ENCODE measurements at regions of chr2 and their contacts with region 1.

Region 1: DNA sequence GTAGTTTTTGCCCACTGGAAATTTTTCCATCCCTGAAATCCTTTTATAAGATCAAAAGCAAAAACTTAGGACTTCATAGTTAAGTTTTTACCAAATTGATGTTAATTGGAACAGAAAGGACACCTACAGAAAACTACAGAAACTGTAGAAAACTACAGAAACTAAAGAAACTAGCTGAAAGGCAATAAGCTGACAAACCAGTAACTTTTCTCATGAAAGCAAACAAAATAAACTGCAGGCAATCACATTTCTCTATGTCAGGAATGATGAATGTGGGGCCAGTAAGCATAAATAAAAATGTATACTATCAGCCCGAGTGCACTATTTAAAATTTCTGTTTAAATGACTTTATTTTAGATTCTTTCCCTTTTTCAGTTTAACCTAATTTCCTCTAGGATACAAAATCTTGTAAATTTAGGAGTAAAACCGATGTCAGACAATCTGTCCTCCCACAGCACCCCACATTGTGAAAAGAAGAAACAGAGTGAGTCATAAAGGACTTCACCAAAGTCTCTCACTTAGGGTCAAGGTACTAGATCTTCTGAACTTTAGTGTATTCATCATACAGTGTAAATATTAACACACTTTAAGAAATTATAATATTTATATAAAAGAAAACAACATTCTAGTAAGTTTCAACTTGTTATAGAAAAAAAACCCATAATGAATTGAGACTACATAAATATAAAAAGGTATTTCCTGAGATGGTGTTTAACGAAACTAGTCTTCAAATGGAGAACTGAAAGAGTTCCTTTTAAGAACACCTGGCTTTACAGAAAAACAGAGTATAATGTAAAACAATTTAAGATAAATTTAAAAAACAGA is 46.6 kb downstream of the USP40 start:
- DNase-seq: peak; percentile 56
- ATAC-seq: peak; percentile 83
- H3K4me3 ChIP-seq: peak overlapping the region in 1 of 5 experiments; percentile 58
- H3K4me3 Mint-ChIP-seq: peak overlapping the region; percentile 63
- H3K27ac ChIP-seq: peak overlapping the region; percentile 89 to 94
- H3K27ac Mint-ChIP-seq: peak overlapping the region; percentile 94
- H3K4me1 ChIP-seq: peaks cover 39 to 46% of the 10 kb centered on the region in 2 donors
- H3K4me1 Mint-ChIP-seq: peaks cover 58% of the 10 kb centered on the region
- H3K27me3 ChIP-seq: no peaks in the 10 kb centered on the region
- H3K27me3 Mint-ChIP-seq: no peaks in the 10 kb centered on the region
- CTCF ChIP-seq: no peak

Region 2: DNA sequence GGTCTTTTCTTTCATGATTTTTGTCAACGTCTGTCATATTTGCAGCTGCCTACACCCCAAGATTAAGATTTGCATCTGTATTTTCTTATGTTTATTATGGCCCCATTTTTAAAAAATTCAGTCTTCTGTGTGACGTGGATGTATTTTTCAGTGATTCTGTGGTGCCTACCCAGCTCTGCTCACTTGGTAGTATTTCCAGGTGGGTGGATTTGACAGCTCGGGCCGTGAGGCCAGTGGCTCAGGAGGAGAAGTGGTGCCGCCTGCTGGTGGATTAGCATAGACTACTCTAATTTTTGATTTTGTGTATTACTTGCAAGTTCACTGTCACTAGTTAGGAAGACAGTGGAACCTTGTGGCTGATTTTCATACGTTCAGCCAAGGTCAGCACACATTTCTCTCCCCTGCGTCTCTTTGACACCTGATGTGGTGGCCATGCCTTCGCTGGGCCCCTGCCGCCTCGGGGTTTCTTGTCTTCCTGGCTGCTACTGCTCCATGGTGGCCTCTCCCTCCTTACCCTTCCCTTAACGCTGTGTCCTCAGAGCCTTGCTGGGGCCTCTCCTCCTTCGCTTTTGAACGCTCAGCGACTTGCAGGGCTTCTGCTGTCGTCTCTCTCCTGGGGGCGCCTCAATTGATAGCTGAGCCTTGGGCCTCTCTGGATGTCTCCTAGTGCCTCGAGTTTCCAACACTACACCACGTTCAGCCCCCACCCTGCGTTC is 76.4 kb before region 1 on chr2:
- CTCF ChIA-PET with region 1: no interaction called
- POLR2A ChIA-PET with region 1: no interaction called
- intact Hi-C with region 1: no loop called
- DNase-seq: peak; percentile 85
- ATAC-seq: peak; percentile 84
- H3K4me3 ChIP-seq: no peak overlapping the region
- H3K4me3 Mint-ChIP-seq: no peak overlapping the region
- H3K27ac ChIP-seq: peak overlapping the region in 1 of 2 donors; percentile 28
- H3K27ac Mint-ChIP-seq: peak overlapping the region; percentile 80
- H3K4me1 ChIP-seq: peaks cover 5 to 8% of the 10 kb centered on the region in 2 donors
- H3K4me1 Mint-ChIP-seq: peaks cover 19% of the 10 kb centered on the region
- H3K27me3 ChIP-seq: no peaks in the 10 kb centered on the region
- H3K27me3 Mint-ChIP-seq: no peaks in the 10 kb centered on the region
- CTCF ChIP-seq: peak; percentile 87

Region 3: GRCh38 chr2:233503947-233504637 is 15.9 kb before region 1 on chr2:
- CTCF ChIA-PET with region 1: no interaction called
- POLR2A ChIA-PET with region 1: interaction called, 7 read pairs
- intact Hi-C with region 1: loop called (anchors 2 kb)
- DNase-seq: no peak
- ATAC-seq: no peak
- H3K4me3 ChIP-seq: no peak overlapping the region
- H3K4me3 Mint-ChIP-seq: no peak overlapping the region
- H3K27ac ChIP-seq: no peak overlapping the region
- H3K27ac Mint-ChIP-seq: no peak overlapping the region
- H3K4me1 ChIP-seq: no peaks in the 10 kb centered on the region
- H3K4me1 Mint-ChIP-seq: peaks cover 10% of the 10 kb centered on the region
- H3K27me3 ChIP-seq: no peaks in the 10 kb centered on the region
- H3K27me3 Mint-ChIP-seq: no peaks in the 10 kb centered on the region
- CTCF ChIP-seq: no peak

Region 4: DNA sequence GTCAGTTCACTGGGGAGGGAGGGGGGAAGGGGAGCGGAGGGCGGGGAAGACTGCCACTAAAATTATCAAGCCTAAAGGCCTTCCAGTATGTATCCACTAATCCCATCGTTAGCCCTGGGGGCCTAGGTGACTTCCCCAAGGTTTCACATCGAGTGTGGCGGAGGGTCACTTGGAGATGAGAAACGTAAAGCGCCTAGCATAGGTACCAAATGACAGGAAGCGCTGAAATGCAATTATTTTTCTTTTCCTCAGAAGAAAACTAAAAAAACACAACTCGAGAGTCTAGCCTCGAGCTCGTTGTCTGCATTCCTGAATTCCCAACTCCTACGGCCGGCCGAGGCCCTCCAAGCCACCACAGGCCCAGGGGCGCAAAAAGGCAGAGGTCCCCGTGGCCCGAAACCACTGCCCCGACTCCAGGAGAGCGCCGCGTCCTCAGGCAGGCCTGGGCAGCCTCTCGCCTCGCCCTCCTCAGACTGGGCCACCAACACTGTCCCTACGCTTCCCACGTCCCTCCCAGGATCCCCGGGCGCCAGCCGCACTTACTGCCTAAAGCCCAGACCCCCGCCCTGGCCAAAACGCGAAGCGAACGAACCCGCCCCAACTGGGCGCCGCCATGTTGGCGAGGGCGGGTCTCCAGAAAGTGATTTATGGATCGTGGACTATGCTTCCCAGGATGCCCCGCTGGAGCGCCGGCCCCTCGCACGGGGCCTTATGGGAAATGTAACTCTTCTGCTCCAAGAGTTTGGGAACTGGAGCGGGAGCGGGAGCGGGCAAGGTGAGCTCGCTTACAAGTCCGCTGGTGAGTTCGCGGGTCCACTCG is 46.4 kb after region 1 on chr2 and contains the start of gene USP40:
- CTCF ChIA-PET with region 1: no interaction called
- POLR2A ChIA-PET with region 1: no interaction called
- intact Hi-C with region 1: loop called (anchors 5 kb)
- DNase-seq: peak; percentile 69
- ATAC-seq: peak; percentile 76
- H3K4me3 ChIP-seq: peak within 1 kb of the TSS; percentile 77 to 94 (median 87)
- H3K4me3 Mint-ChIP-seq: peak within 1 kb of the TSS; percentile 97
- H3K27ac ChIP-seq: peak within 1 kb of the TSS; percentile 88 to 96
- H3K27ac Mint-ChIP-seq: peak within 1 kb of the TSS; percentile 98
- H3K4me1 ChIP-seq: peaks cover 5 to 7% of the 10 kb centered on the region in 2 donors
- H3K4me1 Mint-ChIP-seq: peaks cover 11% of the 10 kb centered on the region
- H3K27me3 ChIP-seq: no peaks in the 10 kb centered on the region
- H3K27me3 Mint-ChIP-seq: no peaks in the 10 kb centered on the region
- CTCF ChIP-seq: no peak
- total RNA-seq, gene USP40: 37.0 and 42.6 TPM in 2 replicates